Dendritic cell treated with granulocyte-macrophage colony-stimulating factor and Interleukin-4, amounts not matched to agents 40 ng/mL and 50 ng/mL, for 4 days (primary cell): ENCODE measurements at regions of chr7 and their contacts with region 1.

Region 1: GRCh38 chr7:28926871-28927597 is 31.1 kb downstream of the TRIL start:
- H3K4me3 Mint-ChIP-seq: peak overlapping the region; percentile 75
- H3K27ac Mint-ChIP-seq: peak overlapping the region; percentile 53
- H3K4me1 Mint-ChIP-seq: peaks cover 27% of the 10 kb centered on the region
- H3K27me3 Mint-ChIP-seq: peaks cover 33% of the 10 kb centered on the region

Region 2: GRCh38 chr7:29105752-29106668 is 179.0 kb after region 1 on chr7:
- intact Hi-C with region 1: loop called (anchors 1 kb)
- H3K4me3 Mint-ChIP-seq: no peak overlapping the region
- H3K27ac Mint-ChIP-seq: peak overlapping the region; percentile 48
- H3K4me1 Mint-ChIP-seq: peaks cover 53% of the 10 kb centered on the region
- H3K27me3 Mint-ChIP-seq: no peaks in the 10 kb centered on the region